ENCODE measurements at regions of chr12 and their contacts with region 1.

Region 1: DNA sequence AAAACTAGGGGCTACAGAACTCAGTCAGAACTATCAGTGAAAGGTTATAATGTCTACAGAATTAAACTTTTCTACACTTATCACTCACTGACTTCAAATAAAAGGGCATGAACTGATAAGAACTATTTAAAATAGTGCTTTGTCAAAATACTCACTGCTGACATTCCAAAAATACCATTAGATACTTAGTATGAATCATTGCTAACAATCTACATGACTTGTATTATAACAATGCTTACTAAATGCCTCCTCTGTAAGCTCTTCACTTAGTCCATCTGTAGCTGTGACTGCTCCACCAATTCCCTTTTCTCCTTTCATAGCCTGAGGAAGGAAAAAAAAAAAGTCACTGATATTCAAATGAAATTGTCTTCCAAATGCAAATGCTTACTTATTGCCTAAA is 17.0 kb downstream of the NFYB start:
- DNase-seq: peak; percentile 35
- H3K27ac ChIP-seq: no peak overlapping the region
- CTCF ChIP-seq: no peak

Region 2: GRCh38 chr12:104108755-104109445 is 12.1 kb before region 1 on chr12:
- CTCF ChIA-PET with region 1: interaction called, 13 read pairs
- POLR2A ChIA-PET with region 1: no interaction called
- DNase-seq: peak; percentile 66
- H3K27ac ChIP-seq: no peak overlapping the region
- CTCF ChIP-seq: peak; percentile 92